MCF 10A (cell line): ENCODE measurements at regions of chr10 and their contacts with region 1.

Region 1: DNA sequence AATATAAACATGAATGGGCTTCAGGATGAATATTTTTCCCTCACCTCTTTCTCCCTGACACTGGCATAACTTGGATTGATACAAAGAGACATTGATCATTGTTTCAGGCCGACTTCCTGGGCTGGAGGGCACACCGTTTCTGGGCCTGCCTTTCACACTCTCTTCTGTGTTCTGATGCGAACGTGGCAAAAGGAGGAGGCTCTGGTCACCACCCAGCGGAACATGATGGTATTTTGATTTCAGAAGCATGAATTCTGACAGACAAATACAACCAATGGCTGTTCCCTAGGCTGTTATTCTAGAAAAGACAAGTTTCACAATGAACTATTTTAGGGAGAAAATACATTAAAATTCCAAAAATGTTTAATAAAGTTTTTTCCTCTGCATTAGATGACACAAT is 534.5 kb upstream of the MKI67 start:
- DNase-seq: peak; percentile 40
- H3K4me3 Mint-ChIP-seq: no peak overlapping the region
- H3K27ac Mint-ChIP-seq: no peak overlapping the region
- H3K4me1 Mint-ChIP-seq: peaks cover 6% of the 10 kb centered on the region
- H3K27me3 Mint-ChIP-seq: peaks cover 13% of the 10 kb centered on the region
- CTCF ChIP-seq: peak; percentile 44

Region 2: GRCh38 chr10:128617532-128617931 is 43.2 kb before region 1 on chr10:
- CTCF ChIA-PET with region 1: no interaction called
- POLR2A ChIA-PET with region 1: no interaction called
- intact Hi-C with region 1: no loop called
- DNase-seq: no peak
- H3K4me3 Mint-ChIP-seq: no peak overlapping the region
- H3K27ac Mint-ChIP-seq: no peak overlapping the region
- H3K4me1 Mint-ChIP-seq: no peaks in the 10 kb centered on the region
- H3K27me3 Mint-ChIP-seq: no peaks in the 10 kb centered on the region
- CTCF ChIP-seq: no peak

Region 3: DNA sequence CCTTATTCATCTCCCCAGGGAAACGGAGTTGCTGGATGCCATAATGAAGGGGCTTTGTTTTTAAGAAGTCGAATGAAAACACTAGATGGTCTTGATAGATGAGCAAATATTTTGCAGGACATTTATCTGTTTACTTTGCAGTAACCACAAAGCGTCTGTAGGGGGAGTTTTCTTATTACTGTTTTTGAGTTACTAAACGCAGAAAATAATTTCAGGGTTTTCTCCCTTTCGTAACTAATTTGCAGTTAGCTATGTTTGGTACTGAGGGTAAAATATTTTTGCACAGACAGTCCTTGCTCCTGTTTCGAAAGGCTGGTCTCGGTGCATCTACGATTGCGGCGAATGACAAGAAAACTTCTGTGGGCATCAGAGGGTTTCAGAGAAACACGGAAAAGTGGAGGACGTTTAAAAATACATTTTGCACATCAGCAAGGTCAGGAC is 28.9 kb before region 1 on chr10:
- CTCF ChIA-PET with region 1: interaction called, 16 read pairs
- POLR2A ChIA-PET with region 1: no interaction called
- intact Hi-C with region 1: loop called (anchors 1 kb)
- DNase-seq: peak; percentile 49
- H3K4me3 Mint-ChIP-seq: no peak overlapping the region
- H3K27ac Mint-ChIP-seq: no peak overlapping the region
- H3K4me1 Mint-ChIP-seq: peaks cover 28% of the 10 kb centered on the region
- H3K27me3 Mint-ChIP-seq: no peaks in the 10 kb centered on the region
- CTCF ChIP-seq: peak; percentile 31